Activated CD8-positive, alpha-beta T cell treated with anti-CD3 and anti-CD28 coated beads for 36 hours (primary cell): ENCODE measurements at regions of chr7 and their contacts with region 1.

Region 1: DNA sequence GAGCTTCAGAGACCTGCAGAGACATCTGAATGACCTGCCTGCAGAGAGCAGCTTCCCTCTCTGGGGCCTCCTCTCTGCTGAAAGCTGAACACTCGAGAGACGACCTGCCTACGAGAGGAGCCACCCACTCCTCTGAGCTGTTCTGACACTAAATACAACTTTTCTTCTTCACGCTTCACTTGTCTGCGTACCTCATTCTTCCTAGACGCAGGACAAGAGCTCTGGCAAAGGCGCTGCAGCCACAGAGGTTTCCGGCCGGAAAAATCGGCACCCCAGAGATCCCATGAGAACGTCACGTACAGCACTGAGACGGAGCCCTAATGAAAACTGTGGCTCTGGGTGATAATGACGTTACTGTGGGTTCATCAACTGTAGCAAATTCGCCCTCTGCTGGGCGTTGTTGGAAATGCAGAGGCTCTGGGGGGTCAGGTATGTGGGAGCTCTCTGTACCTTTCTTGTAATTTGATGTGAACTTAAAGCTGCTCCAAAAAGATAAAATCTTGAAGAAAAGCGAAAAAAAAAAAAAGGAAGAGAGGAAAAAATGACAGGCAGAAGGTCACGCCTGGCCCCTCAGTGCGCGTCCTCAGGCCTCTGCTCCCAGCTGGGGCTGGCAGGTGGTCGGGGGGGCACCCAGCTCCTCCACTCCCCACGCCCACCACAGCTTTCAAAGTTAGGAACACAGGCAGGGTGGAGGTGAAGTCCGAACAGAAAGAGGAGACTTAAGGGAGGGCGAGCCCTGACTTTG is 120.7 kb downstream of the DYNC2I1 start:
- DNase-seq: peak; percentile 97
- ATAC-seq: peak; percentile 81
- H3K4me3 Mint-ChIP-seq: peak overlapping the region; percentile 73
- H3K27ac Mint-ChIP-seq: peak overlapping the region; percentile 93
- H3K4me1 Mint-ChIP-seq: peaks cover 23% of the 10 kb centered on the region
- H3K27me3 Mint-ChIP-seq: no peaks in the 10 kb centered on the region
- CTCF ChIP-seq: peak; percentile 93

Region 2: GRCh38 chr7:158704704-158705468 is 272.1 kb before region 1 on chr7 and contains the start of gene NCAPG2:
- CTCF ChIA-PET with region 1: interaction called, 19 read pairs
- POLR2A ChIA-PET with region 1: interaction called, 6 read pairs
- intact Hi-C with region 1: no loop called
- DNase-seq: peak; percentile 98
- ATAC-seq: peak; percentile 98
- H3K4me3 Mint-ChIP-seq: peak within 1 kb of the TSS; percentile 76
- H3K27ac Mint-ChIP-seq: peak within 1 kb of the TSS; percentile 89
- H3K4me1 Mint-ChIP-seq: peaks cover 35% of the 10 kb centered on the region
- H3K27me3 Mint-ChIP-seq: no peaks in the 10 kb centered on the region
- CTCF ChIP-seq: peak; percentile 26
- total RNA-seq, gene NCAPG2: 108 to 113 TPM

Region 3: GRCh38 chr7:158789842-158790241 is 187.2 kb before region 1 on chr7:
- CTCF ChIA-PET with region 1: interaction called, 10 read pairs
- POLR2A ChIA-PET with region 1: no interaction called
- intact Hi-C with region 1: no loop called
- DNase-seq: no peak
- ATAC-seq: no peak
- H3K4me3 Mint-ChIP-seq: no peak overlapping the region
- H3K27ac Mint-ChIP-seq: no peak overlapping the region
- H3K4me1 Mint-ChIP-seq: no peaks in the 10 kb centered on the region
- H3K27me3 Mint-ChIP-seq: no peaks in the 10 kb centered on the region
- CTCF ChIP-seq: no peak

Region 4: DNA sequence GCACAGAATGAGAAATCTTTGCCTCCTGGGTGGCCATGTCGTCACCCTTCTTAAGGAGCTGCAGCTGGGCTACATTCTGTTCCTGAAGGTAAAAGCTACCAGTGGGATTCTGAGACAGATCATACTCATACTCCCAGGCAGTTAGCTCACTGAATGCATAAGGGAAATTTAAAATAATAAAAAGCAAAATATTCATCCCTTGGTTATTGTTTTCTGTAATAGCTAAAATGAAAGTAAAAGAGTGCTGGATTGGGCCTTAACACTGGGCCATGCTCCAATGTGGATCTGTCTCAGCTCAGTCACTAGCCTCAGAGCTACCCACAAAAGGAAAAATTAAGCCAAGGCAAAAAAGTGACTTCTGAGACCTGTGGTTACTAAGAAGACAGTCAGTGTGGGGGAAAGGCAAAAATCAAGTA is 129.6 kb before region 1 on chr7:
- CTCF ChIA-PET with region 1: interaction called, 10 read pairs
- POLR2A ChIA-PET with region 1: no interaction called
- intact Hi-C with region 1: no loop called
- DNase-seq: peak; percentile 33
- ATAC-seq: peak; percentile 86
- H3K4me3 Mint-ChIP-seq: peak overlapping the region; percentile 50
- H3K27ac Mint-ChIP-seq: peak overlapping the region; percentile 95
- H3K4me1 Mint-ChIP-seq: peaks cover 32% of the 10 kb centered on the region
- H3K27me3 Mint-ChIP-seq: no peaks in the 10 kb centered on the region
- CTCF ChIP-seq: no peak

Region 5: DNA sequence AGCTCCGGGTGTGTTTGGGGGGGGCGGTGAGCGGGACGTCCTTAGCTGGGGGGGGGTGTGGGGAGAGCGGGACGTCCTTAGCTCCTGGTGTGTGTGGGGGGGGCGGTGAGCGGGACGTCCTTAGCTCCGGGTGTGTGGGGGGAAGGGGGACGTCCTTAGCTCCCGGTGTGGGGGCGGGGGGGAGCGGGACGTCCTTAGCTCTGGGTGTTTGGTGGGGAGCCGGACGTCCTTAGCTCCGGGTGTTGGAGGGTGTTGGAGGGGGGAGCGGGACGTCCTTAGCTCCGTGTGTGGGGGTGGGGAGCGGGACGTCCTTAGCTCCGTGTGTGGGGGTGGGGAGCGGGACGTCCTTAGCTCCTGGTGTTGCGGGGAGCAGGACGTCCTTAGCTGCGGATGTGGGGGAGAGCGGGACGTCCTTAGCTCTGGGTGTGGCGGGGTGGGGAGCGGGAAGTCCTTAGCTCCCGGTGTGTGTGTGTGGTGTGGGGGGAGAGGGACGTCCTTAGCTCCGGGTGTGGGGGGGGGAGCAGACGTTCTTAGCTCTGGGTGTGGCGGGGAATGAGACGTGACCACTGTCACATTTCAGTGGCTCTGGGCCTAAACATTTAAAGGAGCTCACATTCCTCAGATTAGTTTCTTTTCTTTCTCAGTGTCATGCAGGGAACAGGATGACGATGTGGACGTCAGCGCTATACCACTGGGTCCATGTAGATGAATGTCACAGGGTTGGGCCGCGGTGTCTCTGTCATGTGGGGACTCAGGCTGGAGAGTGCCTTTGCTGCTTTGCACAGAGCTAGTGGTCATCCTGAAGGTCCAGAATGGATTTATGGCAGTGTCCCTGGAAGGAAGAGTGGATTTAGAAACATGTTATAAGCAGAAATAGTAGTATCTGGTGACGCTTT is 113.2 kb before region 1 on chr7:
- CTCF ChIA-PET with region 1: interaction called, 11 read pairs
- POLR2A ChIA-PET with region 1: no interaction called
- intact Hi-C with region 1: no loop called
- DNase-seq: peak; percentile 82
- ATAC-seq: peak; percentile 66
- H3K4me3 Mint-ChIP-seq: peak overlapping the region; percentile 73
- H3K27ac Mint-ChIP-seq: peak overlapping the region; percentile 83
- H3K4me1 Mint-ChIP-seq: peaks cover 50% of the 10 kb centered on the region
- H3K27me3 Mint-ChIP-seq: no peaks in the 10 kb centered on the region
- CTCF ChIP-seq: no peak

Region 6: GRCh38 chr7:158885624-158886023 is 91.4 kb before region 1 on chr7:
- CTCF ChIA-PET with region 1: interaction called, 16 read pairs
- POLR2A ChIA-PET with region 1: no interaction called
- intact Hi-C with region 1: no loop called
- DNase-seq: no peak
- ATAC-seq: no peak
- H3K4me3 Mint-ChIP-seq: no peak overlapping the region
- H3K27ac Mint-ChIP-seq: no peak overlapping the region
- H3K4me1 Mint-ChIP-seq: no peaks in the 10 kb centered on the region
- H3K27me3 Mint-ChIP-seq: no peaks in the 10 kb centered on the region
- CTCF ChIP-seq: peak; percentile 45

Region 7: GRCh38 chr7:158917818-158918217 is 59.2 kb before region 1 on chr7:
- CTCF ChIA-PET with region 1: no interaction called
- POLR2A ChIA-PET with region 1: no interaction called
- intact Hi-C with region 1: no loop called
- DNase-seq: no peak
- ATAC-seq: no peak
- H3K4me3 Mint-ChIP-seq: no peak overlapping the region
- H3K27ac Mint-ChIP-seq: no peak overlapping the region
- H3K4me1 Mint-ChIP-seq: no peaks in the 10 kb centered on the region
- H3K27me3 Mint-ChIP-seq: no peaks in the 10 kb centered on the region
- CTCF ChIP-seq: no peak

Region 8: DNA sequence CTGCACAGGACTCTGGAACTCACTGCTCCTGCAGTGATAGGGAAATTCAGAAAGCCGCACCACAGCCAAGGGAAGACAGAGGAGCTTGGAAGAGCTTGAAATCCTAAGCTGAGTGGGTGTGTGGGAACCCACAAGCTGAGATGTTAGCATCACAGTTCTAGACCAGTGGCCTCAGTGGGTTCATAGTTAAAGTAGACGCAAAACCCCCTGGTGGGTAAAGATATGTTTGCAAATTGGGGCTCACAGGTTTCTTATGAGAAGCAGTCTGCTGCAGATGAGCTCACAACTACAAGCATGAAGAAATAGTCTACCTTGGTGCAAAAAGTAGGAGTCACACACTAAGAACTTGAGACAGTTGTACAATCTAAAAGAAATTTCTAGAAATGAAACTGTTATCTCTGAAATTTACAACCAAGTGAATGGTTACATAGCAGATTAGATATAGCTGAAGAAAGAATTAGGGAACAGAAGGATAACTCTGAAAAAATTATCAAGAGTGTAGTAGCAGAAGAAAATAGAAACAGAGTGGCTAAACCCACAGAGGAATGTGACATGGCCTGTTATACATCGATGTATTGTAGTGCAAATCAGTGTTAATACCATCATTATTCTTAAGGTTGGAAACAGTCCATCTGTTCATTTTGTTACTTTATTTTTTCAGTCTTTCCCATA is 43.4 kb before region 1 on chr7:
- CTCF ChIA-PET with region 1: no interaction called
- POLR2A ChIA-PET with region 1: no interaction called
- intact Hi-C with region 1: no loop called
- DNase-seq: no peak
- ATAC-seq: no peak
- H3K4me3 Mint-ChIP-seq: no peak overlapping the region
- H3K27ac Mint-ChIP-seq: no peak overlapping the region
- H3K4me1 Mint-ChIP-seq: no peaks in the 10 kb centered on the region
- H3K27me3 Mint-ChIP-seq: no peaks in the 10 kb centered on the region
- CTCF ChIP-seq: no peak

Region 9: DNA sequence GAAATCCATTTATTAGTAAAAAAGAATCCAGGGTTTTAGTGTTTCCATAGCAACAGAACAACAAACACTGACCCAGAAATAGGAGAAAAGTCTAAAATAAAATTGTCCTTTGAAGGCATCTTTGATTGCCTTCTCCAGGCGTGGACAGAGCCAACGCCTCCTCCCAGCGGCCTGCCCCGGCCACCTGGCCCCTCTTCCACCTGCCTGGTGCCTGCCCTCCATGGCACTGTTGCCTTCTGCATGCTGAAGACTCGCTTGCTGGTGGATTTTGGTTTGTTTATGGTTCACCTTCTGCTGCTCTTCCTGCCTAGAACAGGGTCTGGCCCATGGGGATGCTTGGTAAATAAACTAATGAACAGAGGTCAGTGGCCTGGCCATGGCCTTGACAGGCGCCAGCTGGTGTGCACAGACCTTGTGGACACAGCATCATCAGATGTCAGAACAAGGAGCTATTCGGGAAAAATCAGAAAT is 13.2 kb before region 1 on chr7:
- CTCF ChIA-PET with region 1: interaction called, 12 read pairs
- POLR2A ChIA-PET with region 1: no interaction called
- intact Hi-C with region 1: no loop called
- DNase-seq: no peak
- ATAC-seq: no peak
- H3K4me3 Mint-ChIP-seq: no peak overlapping the region
- H3K27ac Mint-ChIP-seq: no peak overlapping the region
- H3K4me1 Mint-ChIP-seq: no peaks in the 10 kb centered on the region
- H3K27me3 Mint-ChIP-seq: no peaks in the 10 kb centered on the region
- CTCF ChIP-seq: no peak

Region 10: GRCh38 chr7:159030490-159031134 is 53.6 kb after region 1 on chr7:
- CTCF ChIA-PET with region 1: no interaction called
- POLR2A ChIA-PET with region 1: no interaction called
- intact Hi-C with region 1: no loop called
- DNase-seq: peak; percentile 21
- ATAC-seq: peak; percentile 21
- H3K4me3 Mint-ChIP-seq: peak overlapping the region; percentile 10
- H3K27ac Mint-ChIP-seq: no peak overlapping the region
- H3K4me1 Mint-ChIP-seq: peaks cover 11% of the 10 kb centered on the region
- H3K27me3 Mint-ChIP-seq: peaks cover 26% of the 10 kb centered on the region
- CTCF ChIP-seq: peak; percentile 16

Region 11: GRCh38 chr7:159237048-159237653 is 260.1 kb after region 1 on chr7:
- CTCF ChIA-PET with region 1: no interaction called
- POLR2A ChIA-PET with region 1: no interaction called
- intact Hi-C with region 1: no loop called
- DNase-seq: no peak
- ATAC-seq: no peak
- H3K4me3 Mint-ChIP-seq: no peak overlapping the region
- H3K27ac Mint-ChIP-seq: no peak overlapping the region
- H3K4me1 Mint-ChIP-seq: no peaks in the 10 kb centered on the region
- H3K27me3 Mint-ChIP-seq: peaks cover 7% of the 10 kb centered on the region
- CTCF ChIP-seq: no peak